ENCODE measurements at regions of chr1 and their contacts with region 1.

Region 1: GRCh38 chr1:172143384-172144055 is 277.0 kb upstream of the C1orf105 start:
- DNase-seq: no peak
- H3K4me3 ChIP-seq: peak overlapping the region; percentile 93
- H3K27me3 ChIP-seq: no peaks in the 10 kb centered on the region
- CTCF ChIP-seq: no peak

Region 2: DNA sequence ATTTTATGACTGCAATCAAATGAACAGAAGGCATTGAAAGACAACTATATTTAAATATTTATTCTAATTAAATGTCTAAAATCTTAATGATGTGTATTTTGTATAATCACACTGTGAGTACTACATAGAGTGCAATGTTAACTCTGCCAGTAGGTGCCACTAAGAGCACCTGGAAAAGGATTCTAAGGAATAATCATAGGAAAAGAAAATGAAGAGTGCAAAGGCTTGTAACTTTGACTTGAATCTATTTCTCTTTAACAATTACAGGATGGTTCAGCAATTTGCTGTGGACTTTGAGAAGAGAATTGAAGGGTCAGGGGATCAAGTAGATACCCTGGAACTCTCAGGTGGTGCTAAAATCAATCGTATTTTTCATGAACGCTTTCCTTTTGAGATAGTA is 101.8 kb before region 1 on chr1:
- CTCF ChIA-PET with region 1: no interaction called
- POLR2A ChIA-PET with region 1: no interaction called
- DNase-seq: no peak
- H3K4me3 ChIP-seq: no peak overlapping the region
- H3K27me3 ChIP-seq: no peaks in the 10 kb centered on the region
- CTCF ChIP-seq: peak; percentile 41

Region 3: GRCh38 chr1:172155766-172156165 is 12.2 kb after region 1 on chr1:
- CTCF ChIA-PET with region 1: interaction called, 4 read pairs
- POLR2A ChIA-PET with region 1: interaction called, 11 read pairs
- DNase-seq: no peak
- H3K4me3 ChIP-seq: no peak overlapping the region
- H3K27me3 ChIP-seq: no peaks in the 10 kb centered on the region
- CTCF ChIP-seq: no peak

Measured in BJ (cell line).